ENCODE measurements at regions of chr15 and their contacts with region 1.

Region 1: GRCh38 chr15:81265944-81266775 is 57.8 kb downstream of the STARD5 start:
- DNase-seq: peak; percentile 96
- H3K4me3 ChIP-seq: peak overlapping the region in 2 of 4 donors; percentile 8 to 27
- H3K27ac ChIP-seq: peak overlapping the region in 1 of 4 donors; percentile 3
- H3K4me1 ChIP-seq: peaks cover 12 to 16% (median 15%) of the 10 kb centered on the region in 4 donors
- H3K27me3 ChIP-seq: peaks cover 0 to 5% (median 0%) of the 10 kb centered on the region in 4 donors
- CTCF ChIP-seq: peak; percentile 77 to 84 (median 79)
- EP300 ChIP-seq: no peak
- POLR2A ChIP-seq: no peak

Region 2: DNA sequence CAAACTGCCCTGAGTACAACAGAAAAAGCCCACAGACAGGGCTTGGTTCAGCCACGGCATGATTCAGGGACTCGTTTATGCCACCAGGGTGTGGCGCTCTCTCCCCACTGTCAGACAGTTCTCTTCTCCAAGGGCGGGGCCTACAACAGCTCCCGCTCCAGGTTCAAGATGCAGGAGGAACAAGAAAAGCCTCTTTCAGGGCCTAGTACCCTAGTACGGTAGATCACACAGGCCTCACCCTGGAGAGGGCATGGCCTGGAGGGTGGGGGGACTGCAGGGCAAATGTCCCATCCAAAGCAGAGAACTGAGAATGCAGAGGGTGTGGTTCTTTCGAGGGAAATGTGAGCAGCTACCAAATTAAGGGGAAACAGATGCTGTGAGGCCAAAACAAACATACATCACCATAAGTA is 288.5 kb before region 1 on chr15:
- intact Hi-C with region 1: loop called (anchors 5 kb)
- DNase-seq: no peak
- H3K4me3 ChIP-seq: no peak overlapping the region
- H3K27ac ChIP-seq: no peak overlapping the region
- H3K4me1 ChIP-seq: peaks cover 5 to 19% (median 12%) of the 10 kb centered on the region in 4 donors
- H3K27me3 ChIP-seq: no peaks in the 10 kb centered on the region
- CTCF ChIP-seq: peak; percentile 46 to 53 (median 51)
- EP300 ChIP-seq: no peak
- POLR2A ChIP-seq: no peak

Region 3: GRCh38 chr15:81106560-81106959 is 159.6 kb before region 1 on chr15:
- intact Hi-C with region 1: loop called (anchors 2 kb)
- DNase-seq: peak; percentile 91
- H3K4me3 ChIP-seq: no peak overlapping the region
- H3K27ac ChIP-seq: no peak overlapping the region
- H3K4me1 ChIP-seq: peaks cover 0 to 17% (median 2%) of the 10 kb centered on the region in 4 donors
- H3K27me3 ChIP-seq: peaks cover 0 to 12% (median 0%) of the 10 kb centered on the region in 4 donors
- CTCF ChIP-seq: peak; percentile 65 to 78 (median 75)
- EP300 ChIP-seq: no peak
- POLR2A ChIP-seq: no peak

Region 4: DNA sequence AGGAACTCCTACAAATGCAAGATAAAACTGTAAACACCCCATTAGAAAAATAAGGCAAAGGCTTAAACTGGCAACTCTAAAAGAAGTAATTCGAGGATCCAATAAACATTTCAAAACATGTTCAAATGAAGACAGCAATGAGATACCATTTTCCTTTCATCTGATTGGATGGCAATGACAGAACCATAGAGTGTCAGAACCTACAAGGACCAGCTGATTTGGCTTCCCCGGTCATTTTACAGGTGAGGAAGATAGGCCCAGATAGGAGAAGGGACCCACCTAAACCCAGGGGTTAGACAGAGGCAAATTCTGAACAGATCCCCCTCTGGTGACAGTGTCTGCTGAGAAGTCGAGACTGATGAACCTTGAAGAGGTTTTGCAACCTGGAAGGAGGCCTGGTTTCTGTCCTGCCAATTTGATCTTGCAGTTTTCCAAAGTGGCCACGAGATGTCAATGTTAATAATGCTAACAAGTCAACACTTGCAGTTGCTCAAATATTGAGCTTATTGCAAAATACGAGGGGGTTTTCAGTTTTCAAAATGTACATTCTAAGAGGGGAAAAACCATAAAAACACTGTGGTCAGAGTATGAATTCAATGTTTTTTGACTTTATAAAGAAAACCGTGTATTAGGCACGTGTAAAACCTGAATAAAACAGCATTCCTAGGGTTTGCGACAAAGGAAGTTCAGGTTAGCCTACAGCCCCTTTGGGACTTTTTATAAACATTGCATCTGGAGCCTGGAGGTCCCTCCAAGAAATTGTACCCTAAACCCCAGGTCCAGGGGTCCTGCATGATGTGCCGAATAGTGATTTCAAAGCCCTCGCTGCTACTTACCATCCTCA is 110.6 kb before region 1 on chr15:
- intact Hi-C with region 1: loop called (anchors 2 kb)
- DNase-seq: no peak
- H3K4me3 ChIP-seq: no peak overlapping the region
- H3K27ac ChIP-seq: peak overlapping the region in 1 of 4 donors; percentile 44
- H3K4me1 ChIP-seq: peaks cover 6 to 19% (median 14%) of the 10 kb centered on the region in 4 donors
- H3K27me3 ChIP-seq: peaks cover 0 to 5% (median 0%) of the 10 kb centered on the region in 4 donors
- CTCF ChIP-seq: peak; percentile 42 to 56 (median 43)
- EP300 ChIP-seq: no peak
- POLR2A ChIP-seq: no peak